Natural killer cell (primary cell): ENCODE measurements at regions of chrX and their contacts with region 1.

Region 1: GRCh38 chrX:72018277-72019112 is 107.8 kb downstream of the NHSL2 start:
- DNase-seq: peak; percentile 80 to 89
- ATAC-seq: peak; percentile 93 to 98 (median 96)
- H3K4me3 ChIP-seq: no peak overlapping the region
- H3K4me3 Mint-ChIP-seq: peak overlapping the region; percentile 17
- H3K27ac ChIP-seq: no peak overlapping the region
- H3K27ac Mint-ChIP-seq: peak overlapping the region; percentile 26 to 74
- H3K4me1 ChIP-seq: peaks cover 20% of the 10 kb centered on the region
- H3K4me1 Mint-ChIP-seq: peaks cover 0 to 9% of the 10 kb centered on the region in 2 donors
- H3K27me3 ChIP-seq: peaks cover 2% of the 10 kb centered on the region
- H3K27me3 Mint-ChIP-seq: peaks cover 8 to 67% of the 10 kb centered on the region in 2 donors
- CTCF ChIP-seq: peak; percentile 60

Region 2: DNA sequence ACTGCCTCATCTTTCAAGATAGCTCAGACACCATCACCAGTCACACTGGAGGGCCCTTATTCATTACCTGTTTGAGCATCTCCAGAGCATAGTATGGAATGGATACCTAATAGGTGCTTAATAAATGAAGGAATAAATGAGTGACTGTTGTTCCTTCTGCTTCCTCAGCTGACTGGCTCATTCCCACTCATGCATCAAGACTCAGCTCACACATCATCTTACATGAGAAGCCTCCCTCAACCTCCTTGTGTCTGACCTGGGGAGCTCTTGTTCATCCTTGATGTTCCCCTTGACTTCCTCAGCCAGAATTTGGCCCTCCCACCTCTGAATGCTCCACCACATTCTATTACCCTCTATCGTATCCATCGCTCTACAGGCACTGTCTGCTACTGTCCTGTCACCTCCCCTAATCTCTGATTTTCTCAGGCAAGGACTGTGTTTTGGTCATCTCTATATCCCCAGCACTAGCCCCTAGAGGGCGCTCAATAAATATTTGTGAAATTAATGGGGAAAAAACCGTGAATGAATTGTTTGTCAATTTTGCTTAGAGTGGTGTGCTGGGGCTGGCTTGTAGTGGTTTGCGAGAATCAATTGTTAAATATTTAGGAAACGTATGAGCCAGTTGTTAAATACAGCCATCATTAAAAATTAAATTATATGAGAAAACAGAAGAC is 19.5 kb before region 1 on chrX:
- intact Hi-C with region 1: loop called (anchors 2 kb)
- DNase-seq: peak in 1 of 2 donors; percentile 63
- ATAC-seq: peak; percentile 58 to 75 (median 71)
- H3K4me3 ChIP-seq: no peak overlapping the region
- H3K4me3 Mint-ChIP-seq: no peak overlapping the region
- H3K27ac ChIP-seq: no peak overlapping the region
- H3K27ac Mint-ChIP-seq: no peak overlapping the region
- H3K4me1 ChIP-seq: peaks cover 12% of the 10 kb centered on the region
- H3K4me1 Mint-ChIP-seq: peaks cover 23 to 27% of the 10 kb centered on the region in 2 donors
- H3K27me3 ChIP-seq: no peaks in the 10 kb centered on the region
- H3K27me3 Mint-ChIP-seq: peaks cover 15 to 26% of the 10 kb centered on the region in 2 donors
- CTCF ChIP-seq: peak; percentile 62

Region 3: DNA sequence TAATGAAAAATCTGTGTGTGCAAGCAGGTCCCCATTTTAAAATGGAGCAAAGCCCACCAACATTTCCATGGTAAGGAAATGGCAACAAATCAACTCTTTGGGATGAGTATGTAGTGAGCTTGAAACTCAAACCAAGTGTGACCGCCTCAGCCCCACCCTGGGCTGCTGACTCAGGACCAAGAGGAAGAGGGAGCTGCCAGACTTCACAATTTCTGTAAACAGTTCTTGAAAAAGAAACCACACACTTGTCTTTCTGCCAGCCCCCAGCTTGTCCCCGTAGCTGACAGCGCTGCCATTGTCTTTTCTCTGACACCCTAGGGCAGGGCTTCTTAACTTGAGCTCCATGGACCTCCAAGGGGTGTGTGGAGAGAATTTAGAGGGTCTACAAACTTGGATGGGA is 102.9 kb after region 1 on chrX:
- intact Hi-C with region 1: loop called (anchors 1 kb)
- DNase-seq: peak; percentile 37 to 68
- ATAC-seq: peak; percentile 75 to 92 (median 86)
- H3K4me3 ChIP-seq: no peak overlapping the region
- H3K4me3 Mint-ChIP-seq: peak overlapping the region; percentile 79
- H3K27ac ChIP-seq: peak overlapping the region; percentile 85
- H3K27ac Mint-ChIP-seq: peak overlapping the region; percentile 89 to 90
- H3K4me1 ChIP-seq: peaks cover 58% of the 10 kb centered on the region
- H3K4me1 Mint-ChIP-seq: peaks cover 68 to 73% of the 10 kb centered on the region in 2 donors
- H3K27me3 ChIP-seq: no peaks in the 10 kb centered on the region
- H3K27me3 Mint-ChIP-seq: peaks cover 2 to 16% of the 10 kb centered on the region in 2 donors
- CTCF ChIP-seq: no peak

Region 4: DNA sequence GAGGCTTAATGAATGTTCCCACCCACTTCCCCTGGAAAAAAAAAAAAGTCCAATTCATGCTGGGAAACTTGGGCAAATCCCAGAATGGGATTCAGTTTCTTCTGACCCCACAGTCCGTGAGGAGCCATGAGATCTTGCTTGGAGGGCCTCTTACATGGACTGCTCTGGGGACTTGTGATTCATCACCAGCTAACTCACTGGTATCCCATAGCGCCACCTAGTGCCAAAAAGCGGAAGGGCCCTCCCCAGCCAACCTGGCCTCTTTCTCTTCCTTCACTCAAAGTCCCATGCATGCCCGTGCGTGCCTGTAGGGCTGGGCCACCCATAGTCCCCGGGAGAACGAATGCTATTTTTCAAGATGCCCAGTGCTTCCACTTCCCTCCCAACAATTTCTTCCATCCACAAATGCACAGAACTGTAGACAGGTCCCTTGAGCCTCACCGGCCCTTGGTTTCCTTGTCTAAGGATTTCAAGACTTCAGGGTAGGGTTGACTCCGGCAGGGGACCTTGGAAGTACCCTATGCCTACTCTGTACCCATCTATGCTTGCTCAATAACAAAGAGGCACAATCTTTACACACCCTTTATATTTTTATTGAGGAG is 108.1 kb after region 1 on chrX:
- intact Hi-C with region 1: loop called (anchors 1 kb)
- DNase-seq: peak; percentile 77 to 86
- ATAC-seq: peak; percentile 75 to 81 (median 81)
- H3K4me3 ChIP-seq: no peak overlapping the region
- H3K4me3 Mint-ChIP-seq: peak overlapping the region; percentile 1
- H3K27ac ChIP-seq: no peak overlapping the region
- H3K27ac Mint-ChIP-seq: no peak overlapping the region
- H3K4me1 ChIP-seq: peaks cover 60% of the 10 kb centered on the region
- H3K4me1 Mint-ChIP-seq: peaks cover 51 to 60% of the 10 kb centered on the region in 2 donors
- H3K27me3 ChIP-seq: no peaks in the 10 kb centered on the region
- H3K27me3 Mint-ChIP-seq: peaks cover 2 to 25% of the 10 kb centered on the region in 2 donors
- CTCF ChIP-seq: peak; percentile 60